K562 (cell line): ENCODE measurements at regions of chr16 and their contacts with region 1.

Region 1: DNA sequence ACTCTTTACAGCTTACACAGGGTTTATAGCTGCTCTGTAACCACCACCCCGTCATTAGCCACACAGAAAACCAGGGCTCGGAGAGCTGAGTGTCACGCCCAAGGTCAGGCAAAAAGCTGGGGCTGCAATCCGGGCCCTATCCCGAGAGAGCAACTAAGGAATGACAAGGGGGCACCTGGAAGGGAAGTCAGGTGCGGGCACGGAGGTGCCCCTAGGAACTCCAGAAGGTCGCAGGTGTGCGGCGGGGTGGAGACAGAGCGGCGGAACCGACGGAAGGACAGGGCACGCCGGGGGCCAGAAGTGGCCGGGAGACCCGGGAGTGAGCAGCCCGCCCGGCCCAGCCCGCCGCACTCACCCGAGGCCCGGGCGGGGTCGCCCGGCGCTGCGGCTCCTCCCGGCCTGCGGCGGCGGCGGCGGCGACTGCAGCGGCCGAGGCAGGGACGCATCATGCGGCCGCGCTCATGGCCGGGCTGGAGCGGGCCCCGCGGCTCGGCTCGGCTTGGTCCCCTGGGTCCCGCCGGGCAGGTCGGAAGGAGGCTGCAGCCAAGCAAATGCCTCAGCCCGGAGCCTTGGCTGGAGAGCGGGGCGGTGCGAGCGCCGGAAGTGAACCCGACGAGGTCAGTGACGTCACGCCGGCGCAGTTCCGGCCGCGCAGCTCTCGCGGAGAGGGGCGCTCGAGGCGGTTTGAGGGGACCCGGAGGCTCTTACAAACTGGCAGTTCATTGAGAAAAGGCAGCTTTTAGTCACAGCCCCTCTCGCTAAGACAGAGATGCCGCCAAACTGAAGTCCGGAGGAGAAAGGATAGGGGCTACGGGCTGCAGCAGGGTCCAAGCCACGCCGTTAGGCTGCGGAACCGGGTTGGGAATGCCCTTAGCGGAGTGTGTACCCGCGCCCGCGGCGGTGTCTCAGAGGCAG is at the start of gene ZDHHC7:
- DNase-seq: peak; percentile 93 to 95 (median 94)
- ATAC-seq: peak; percentile 92
- H3K4me3 ChIP-seq: peak within 1 kb of the TSS; percentile 97
- H3K27ac ChIP-seq: peak within 1 kb of the TSS; percentile 98
- H3K4me1 ChIP-seq: peaks cover 7 to 18% of the 10 kb centered on the region in 2 experiments
- H3K27me3 ChIP-seq: no peaks in the 10 kb centered on the region
- CTCF ChIP-seq: peak in 2 of 3 experiments; percentile 15 to 35; a peak in 4 of 6 replicates
- EP300 ChIP-seq: peak; percentile 16; the same call in 1 of the 2 replicates
- POLR2A ChIP-seq: peak; percentile 99
- RAD21 ChIP-seq: peak; percentile 9 to 30; a peak in 3 of 4 replicates
- polyA plus RNA-seq, gene ZDHHC7: 1.7 to 1.8 TPM

Region 2: DNA sequence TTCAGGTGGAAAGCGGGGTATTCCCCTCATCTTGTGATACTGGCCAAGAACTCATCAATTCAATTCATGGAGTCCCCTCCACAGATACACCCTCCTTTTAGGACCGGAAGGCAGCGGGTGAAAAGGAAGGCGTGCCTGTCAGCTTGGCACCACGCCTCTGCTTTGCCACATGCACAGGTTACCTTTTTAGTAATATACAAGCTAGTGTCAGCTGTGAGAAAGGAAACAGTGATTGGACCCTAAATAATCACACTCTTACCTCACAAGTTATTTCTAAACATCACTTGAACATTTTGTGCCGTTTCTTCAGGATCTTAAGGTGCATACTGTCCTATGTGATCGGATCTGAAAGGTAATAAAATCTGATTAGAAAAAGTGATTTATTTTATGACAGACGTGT is 15.5 kb before region 1 on chr16:
- CTCF ChIA-PET with region 1: no interaction called
- POLR2A ChIA-PET with region 1: interaction called, 23 read pairs
- in situ Hi-C with region 1: no loop called
- intact Hi-C with region 1: no loop called
- DNase-seq: no peak
- ATAC-seq: no peak
- H3K4me3 ChIP-seq: no peak overlapping the region
- H3K27ac ChIP-seq: no peak overlapping the region
- H3K4me1 ChIP-seq: peaks cover 6 to 12% of the 10 kb centered on the region in 2 experiments
- H3K27me3 ChIP-seq: no peaks in the 10 kb centered on the region
- CTCF ChIP-seq: no peak
- EP300 ChIP-seq: no peak
- POLR2A ChIP-seq: no peak
- RAD21 ChIP-seq: no peak

Region 3: GRCh38 chr16:85027349-85027957 is 16.3 kb after region 1 on chr16 and contains the start of gene KIAA0513:
- CTCF ChIA-PET with region 1: interaction called, 3 read pairs
- POLR2A ChIA-PET with region 1: interaction called, 50 read pairs
- in situ Hi-C with region 1: no loop called
- intact Hi-C with region 1: no loop called
- DNase-seq: peak; percentile 98 to 100 (median 100)
- ATAC-seq: peak; percentile 92
- H3K4me3 ChIP-seq: peak within 1 kb of the TSS; percentile 75
- H3K27ac ChIP-seq: peak within 1 kb of the TSS; percentile 57
- H3K4me1 ChIP-seq: peaks cover 33 to 39% of the 10 kb centered on the region in 2 experiments
- H3K27me3 ChIP-seq: no peaks in the 10 kb centered on the region
- CTCF ChIP-seq: peak in 2 of 3 experiments; percentile 48 to 60; a peak in 5 of 6 replicates
- EP300 ChIP-seq: peak; percentile 45
- POLR2A ChIP-seq: peak; percentile 83
- RAD21 ChIP-seq: peak; percentile 38 to 47; a peak in 3 of 4 replicates
- polyA plus RNA-seq, gene KIAA0513: 0.18 to 0.36 TPM